Ovary (tissue), 10 donors: ENCODE measurements at regions of chrX and their contacts with region 1.

Region 1: GRCh38 chrX:71365876-71366673 is at the start of gene TAF1:
- DNase-seq: peak; percentile 87 to 94 (median 91)
- H3K4me3 ChIP-seq: peak within 1 kb of the TSS; percentile 68
- H3K27ac ChIP-seq: peak within 1 kb of the TSS; percentile 46 to 69
- H3K4me1 ChIP-seq: peaks cover 6% of the 10 kb centered on the region
- H3K27me3 ChIP-seq: no peaks in the 10 kb centered on the region
- CTCF ChIP-seq: no peak
- EP300 ChIP-seq: no peak
- POLR2A ChIP-seq: no peak
- total RNA-seq, gene TAF1: 25.5 to 52.0 (median 46.0) TPM

Region 2: DNA sequence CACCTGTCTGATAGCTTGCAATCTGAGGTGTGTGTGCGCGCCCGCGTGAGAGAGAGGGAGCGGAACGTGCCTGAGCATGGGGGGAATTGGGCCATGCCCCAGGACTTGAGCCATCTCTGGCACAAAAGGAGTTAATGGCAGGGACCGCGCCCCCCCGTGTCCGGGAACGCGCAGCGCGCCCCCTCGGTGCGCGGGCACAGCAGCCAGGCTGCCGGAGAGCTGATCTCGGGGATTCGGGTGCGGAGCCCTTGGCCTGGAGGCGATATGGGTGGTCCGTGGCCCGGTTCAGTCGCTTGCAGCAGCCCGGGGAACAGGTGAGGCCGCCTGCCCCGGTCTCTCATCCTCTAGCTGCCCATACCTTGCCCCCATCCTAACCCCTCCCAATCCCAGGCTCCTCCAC is 221.4 kb before region 1 on chrX and contains the start of gene NLGN3:
- intact Hi-C with region 1: no loop called
- DNase-seq: peak in 3 of 5 donors; percentile 47 to 65 (median 51)
- H3K4me3 ChIP-seq: peak within 1 kb of the TSS; percentile 20
- H3K27ac ChIP-seq: no peak within 1 kb of the TSS
- H3K4me1 ChIP-seq: no peaks in the 10 kb centered on the region
- H3K27me3 ChIP-seq: no peaks in the 10 kb centered on the region
- CTCF ChIP-seq: no peak
- EP300 ChIP-seq: no peak
- POLR2A ChIP-seq: no peak
- total RNA-seq, gene NLGN3: 2.1 to 10.9 (median 6.7) TPM

Region 3: DNA sequence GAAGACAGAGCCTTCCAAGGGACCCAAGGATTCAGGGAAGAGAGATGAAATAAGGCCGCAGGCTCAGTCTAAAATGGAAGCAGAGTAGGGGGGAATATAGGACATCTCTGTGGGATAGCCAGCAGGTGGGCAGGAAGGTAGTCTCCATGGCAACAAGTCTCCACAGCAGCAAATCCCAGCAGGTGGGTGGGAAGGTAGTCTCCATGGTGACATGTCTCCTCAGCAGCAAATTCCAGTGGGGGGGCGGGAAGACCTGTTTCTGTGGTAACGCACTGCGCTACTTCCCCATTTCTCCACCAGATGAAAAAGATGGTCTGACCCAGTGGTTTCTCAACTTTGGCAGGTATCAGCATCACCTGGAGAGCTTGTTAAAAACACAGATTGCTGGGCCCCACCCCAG is 203.1 kb before region 1 on chrX:
- intact Hi-C with region 1: no loop called
- DNase-seq: no peak
- H3K4me3 ChIP-seq: no peak overlapping the region
- H3K27ac ChIP-seq: no peak overlapping the region
- H3K4me1 ChIP-seq: no peaks in the 10 kb centered on the region
- H3K27me3 ChIP-seq: no peaks in the 10 kb centered on the region
- CTCF ChIP-seq: no peak
- EP300 ChIP-seq: no peak
- POLR2A ChIP-seq: no peak

Region 4: DNA sequence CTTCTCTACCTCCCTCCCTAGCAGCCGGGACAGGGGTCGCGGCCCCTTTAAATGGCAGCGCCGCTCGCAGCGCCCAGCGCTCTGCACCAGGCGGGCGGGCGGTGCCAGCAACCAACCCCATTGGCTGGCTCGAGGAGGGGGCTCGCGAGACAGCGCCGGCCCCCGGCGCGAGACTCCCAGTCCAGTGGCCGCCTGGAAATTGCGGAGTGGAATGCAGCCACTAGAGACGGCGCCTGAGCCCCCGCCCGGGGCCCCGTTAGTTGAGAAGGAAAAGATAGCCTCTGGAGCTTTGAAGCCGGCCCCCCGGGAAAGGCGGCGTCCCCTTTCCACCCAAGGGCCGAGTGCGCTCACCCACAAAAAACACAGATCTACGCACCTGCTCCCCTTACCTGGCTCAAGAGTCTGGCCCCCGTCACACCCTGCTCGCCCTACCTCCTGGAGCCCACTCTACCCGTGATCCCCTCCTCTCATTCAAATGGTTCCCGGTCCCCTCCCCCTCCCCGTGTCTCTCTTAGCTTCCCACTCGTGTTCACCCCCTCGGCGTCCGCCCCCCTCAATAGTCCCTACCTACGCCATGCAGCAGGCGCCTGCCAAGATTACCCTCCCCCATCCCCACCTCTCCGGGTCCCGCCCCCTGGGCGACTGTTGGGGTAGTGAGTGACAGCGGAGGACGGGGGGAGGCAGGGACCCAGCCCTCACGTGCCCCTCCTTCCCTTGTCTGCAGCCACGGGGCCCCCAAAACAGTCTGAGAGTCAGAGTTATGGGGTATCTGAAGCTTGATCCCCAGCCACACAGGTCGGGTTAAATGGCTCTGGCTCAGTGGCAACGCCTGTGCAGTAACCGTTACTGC is 111.8 kb before region 1 on chrX and contains the start of gene ZMYM3:
- intact Hi-C with region 1: loop called in 1 of 4 experiments (anchors 10 kb)
- DNase-seq: peak; percentile 85 to 89 (median 86)
- H3K4me3 ChIP-seq: peak within 1 kb of the TSS; percentile 70
- H3K27ac ChIP-seq: peak within 1 kb of the TSS; percentile 50 to 84
- H3K4me1 ChIP-seq: peaks cover 6% of the 10 kb centered on the region
- H3K27me3 ChIP-seq: no peaks in the 10 kb centered on the region
- CTCF ChIP-seq: no peak
- EP300 ChIP-seq: no peak
- POLR2A ChIP-seq: no peak
- total RNA-seq, gene ZMYM3: 17.2 to 75.8 (median 66.5) TPM

Region 5: GRCh38 chrX:71292669-71293365 is 73.3 kb before region 1 on chrX:
- intact Hi-C with region 1: loop called in 1 of 4 experiments (anchors 10 kb)
- DNase-seq: no peak
- H3K4me3 ChIP-seq: no peak overlapping the region
- H3K27ac ChIP-seq: no peak overlapping the region
- H3K4me1 ChIP-seq: peaks cover 3% of the 10 kb centered on the region
- H3K27me3 ChIP-seq: no peaks in the 10 kb centered on the region
- CTCF ChIP-seq: no peak
- EP300 ChIP-seq: no peak
- POLR2A ChIP-seq: no peak